ENCODE measurements at regions of chr14 and their contacts with region 1.

Region 1: DNA sequence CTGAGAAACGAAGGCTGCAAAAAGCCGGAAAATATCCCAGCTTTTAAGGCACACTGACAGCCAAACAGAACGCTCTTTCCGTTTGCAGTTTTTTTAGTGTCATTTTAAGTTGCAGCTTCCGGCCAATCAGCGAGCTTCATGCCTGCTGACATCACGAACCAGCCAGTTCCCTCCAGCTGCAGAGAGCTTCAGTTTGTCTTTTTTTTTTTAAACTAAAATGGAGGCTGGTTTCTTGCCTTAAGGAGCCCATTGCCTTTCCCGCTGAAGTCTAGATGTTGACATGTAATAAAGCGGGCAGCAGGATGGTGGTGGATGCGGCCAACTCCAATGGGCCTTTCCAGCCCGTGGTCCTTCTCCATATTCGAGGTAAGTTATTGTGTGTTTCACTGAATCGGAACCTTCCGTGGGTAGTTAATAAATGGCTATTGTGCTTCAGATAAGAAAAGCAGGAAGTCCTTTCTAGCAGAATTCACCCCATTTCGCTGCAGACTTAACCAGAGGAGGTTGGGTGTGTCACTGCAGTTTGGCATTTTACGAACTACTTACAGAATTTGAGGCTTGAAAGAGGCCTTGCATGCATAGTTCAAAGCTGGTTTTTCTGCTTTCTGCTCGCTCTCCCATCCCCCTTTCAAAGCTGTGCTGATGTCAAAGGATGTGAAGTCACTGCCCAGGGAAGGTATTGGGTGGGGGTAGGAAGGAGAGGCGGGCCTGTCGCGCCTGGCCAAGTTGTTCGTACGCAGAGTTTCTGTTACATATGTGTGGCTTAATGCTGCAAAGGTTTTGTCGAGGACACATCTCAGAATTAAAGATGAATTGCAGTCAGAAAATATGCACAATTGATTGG is 48.4 kb downstream of the PPP2R5C start:
- DNase-seq: peak; percentile 91 to 97 (median 95)
- H3K4me3 ChIP-seq: peak overlapping the region; percentile 85 to 97
- H3K4me3 Mint-ChIP-seq: peak overlapping the region; percentile 90 to 97 (median 95)
- H3K27ac ChIP-seq: peak overlapping the region; percentile 98
- H3K27ac Mint-ChIP-seq: peak overlapping the region; percentile 97 to 100 (median 99)
- H3K4me1 ChIP-seq: peaks cover 46% of the 10 kb centered on the region
- H3K4me1 Mint-ChIP-seq: peaks cover 31 to 62% (median 46%) of the 10 kb centered on the region in 4 donors
- H3K27me3 ChIP-seq: no peaks in the 10 kb centered on the region
- H3K27me3 Mint-ChIP-seq: no peaks in the 10 kb centered on the region

Region 2: DNA sequence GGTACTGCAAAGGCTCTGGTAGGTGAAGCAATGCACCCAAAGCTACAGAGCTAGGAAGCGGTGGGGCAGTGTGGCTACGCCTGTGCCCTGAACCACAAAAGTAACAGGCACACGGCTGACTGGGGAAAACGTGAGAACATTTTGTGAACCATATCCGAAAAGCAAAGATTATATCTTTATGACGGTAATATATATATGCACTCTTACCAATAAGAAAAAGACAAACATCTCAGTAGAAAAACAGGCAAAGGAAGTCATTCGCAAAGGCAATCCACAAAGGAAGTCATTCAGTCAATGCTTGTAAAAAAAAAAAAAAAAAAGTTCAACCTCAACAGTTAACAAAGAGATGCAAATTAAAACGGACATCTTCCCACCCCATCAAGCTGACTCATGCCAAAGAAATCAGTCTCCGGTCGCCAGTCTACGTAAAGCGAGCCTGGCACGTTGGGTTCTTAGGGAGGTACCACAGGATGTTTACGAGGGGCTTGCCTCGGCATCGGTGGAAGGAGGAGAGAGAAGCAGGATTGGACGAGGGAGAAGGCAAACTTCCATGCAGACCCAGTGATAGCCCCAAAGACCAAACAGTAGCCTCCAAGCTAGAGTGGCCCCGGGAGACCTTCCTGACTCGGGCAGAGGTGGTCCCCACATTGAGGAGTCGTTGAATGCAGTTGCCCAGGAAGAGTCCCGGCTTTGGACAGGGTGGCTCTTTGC is 87.8 kb before region 1 on chr14:
- CTCF ChIA-PET with region 1: interaction called, 5 read pairs
- POLR2A ChIA-PET with region 1: interaction called, 22 read pairs
- intact Hi-C with region 1: no loop called
- DNase-seq: peak; percentile 90 to 93 (median 91)
- H3K4me3 ChIP-seq: peak overlapping the region in 1 of 2 donors; percentile 55
- H3K4me3 Mint-ChIP-seq: peak overlapping the region; percentile 66 to 92 (median 82)
- H3K27ac ChIP-seq: peak overlapping the region; percentile 84
- H3K27ac Mint-ChIP-seq: peak overlapping the region; percentile 92 to 100 (median 97)
- H3K4me1 ChIP-seq: peaks cover 61% of the 10 kb centered on the region
- H3K4me1 Mint-ChIP-seq: peaks cover 35 to 69% (median 46%) of the 10 kb centered on the region in 4 donors
- H3K27me3 ChIP-seq: no peaks in the 10 kb centered on the region
- H3K27me3 Mint-ChIP-seq: no peaks in the 10 kb centered on the region

Region 3: DNA sequence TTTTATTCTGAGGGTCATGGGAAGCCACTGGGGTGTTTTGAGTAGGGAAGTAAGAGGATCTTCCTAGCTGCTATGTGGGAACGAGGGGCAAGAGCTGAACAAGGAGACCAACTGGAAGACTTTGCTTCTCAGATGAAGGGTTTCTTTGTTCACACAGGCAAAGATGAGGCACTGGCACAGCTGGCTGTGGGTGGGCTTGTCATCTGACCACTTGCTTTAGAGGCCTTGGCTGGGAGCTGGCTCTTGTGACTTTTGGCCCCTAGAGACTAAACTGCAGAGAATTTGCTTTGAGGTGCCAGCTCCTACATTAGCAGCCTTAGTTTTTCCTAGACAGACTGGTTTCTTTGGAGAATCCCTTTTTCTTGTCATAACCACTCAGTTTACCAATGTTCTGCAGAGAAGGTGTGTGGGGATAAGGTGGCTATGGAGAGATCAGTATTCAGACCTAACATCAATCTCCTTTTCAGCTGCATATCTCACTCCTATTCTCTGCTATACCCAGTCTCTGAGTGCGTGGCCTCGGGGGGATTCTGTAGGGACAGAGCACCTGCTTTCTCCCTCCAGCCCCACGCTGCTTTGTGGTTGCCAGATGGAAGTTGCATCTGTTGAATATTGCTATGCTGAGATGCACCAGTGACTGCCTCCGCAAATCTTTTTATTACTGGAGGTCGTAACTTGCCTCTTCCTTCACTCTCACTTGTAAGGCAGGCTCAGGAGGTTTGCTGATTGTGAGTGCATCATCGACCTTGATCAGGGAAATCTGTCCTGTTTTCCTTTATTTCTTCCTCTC is 35.7 kb before region 1 on chr14:
- CTCF ChIA-PET with region 1: interaction called, 44 read pairs
- POLR2A ChIA-PET with region 1: interaction called, 49 read pairs
- intact Hi-C with region 1: no loop called
- DNase-seq: no peak
- H3K4me3 ChIP-seq: no peak overlapping the region
- H3K4me3 Mint-ChIP-seq: no peak overlapping the region
- H3K27ac ChIP-seq: no peak overlapping the region
- H3K27ac Mint-ChIP-seq: peak overlapping the region in 3 of 7 donors; percentile 5 to 69 (median 42)
- H3K4me1 ChIP-seq: peaks cover 13% of the 10 kb centered on the region
- H3K4me1 Mint-ChIP-seq: peaks cover 14 to 42% (median 27%) of the 10 kb centered on the region in 4 donors
- H3K27me3 ChIP-seq: no peaks in the 10 kb centered on the region
- H3K27me3 Mint-ChIP-seq: no peaks in the 10 kb centered on the region

Region 4: GRCh38 chr14:101791919-101792572 is 17.8 kb before region 1 on chr14:
- CTCF ChIA-PET with region 1: interaction called, 8 read pairs
- POLR2A ChIA-PET with region 1: interaction called, 39 read pairs
- intact Hi-C with region 1: loop called (anchors 2 kb)
- DNase-seq: peak in 4 of 5 donors; percentile 42 to 54 (median 44)
- H3K4me3 ChIP-seq: peak overlapping the region; percentile 13 to 41
- H3K4me3 Mint-ChIP-seq: peak overlapping the region; percentile 66 to 90 (median 80)
- H3K27ac ChIP-seq: peak overlapping the region; percentile 58
- H3K27ac Mint-ChIP-seq: peak overlapping the region; percentile 81 to 95 (median 86)
- H3K4me1 ChIP-seq: peaks cover 14% of the 10 kb centered on the region
- H3K4me1 Mint-ChIP-seq: peaks cover 18 to 36% (median 26%) of the 10 kb centered on the region in 4 donors
- H3K27me3 ChIP-seq: no peaks in the 10 kb centered on the region
- H3K27me3 Mint-ChIP-seq: no peaks in the 10 kb centered on the region

Region 5: GRCh38 chr14:101834800-101835547 is 25.1 kb after region 1 on chr14:
- CTCF ChIA-PET with region 1: interaction called, 3 read pairs
- POLR2A ChIA-PET with region 1: interaction called, 1,038 read pairs
- intact Hi-C with region 1: no loop called
- DNase-seq: no peak
- H3K4me3 ChIP-seq: no peak overlapping the region
- H3K4me3 Mint-ChIP-seq: peak overlapping the region in 5 of 8 donors; percentile 15 to 62 (median 35)
- H3K27ac ChIP-seq: peak overlapping the region; percentile 31
- H3K27ac Mint-ChIP-seq: peak overlapping the region; percentile 65 to 97 (median 83)
- H3K4me1 ChIP-seq: peaks cover 100% of the 10 kb centered on the region
- H3K4me1 Mint-ChIP-seq: peaks cover 61 to 99% (median 82%) of the 10 kb centered on the region in 4 donors
- H3K27me3 ChIP-seq: no peaks in the 10 kb centered on the region
- H3K27me3 Mint-ChIP-seq: no peaks in the 10 kb centered on the region

Region 6: DNA sequence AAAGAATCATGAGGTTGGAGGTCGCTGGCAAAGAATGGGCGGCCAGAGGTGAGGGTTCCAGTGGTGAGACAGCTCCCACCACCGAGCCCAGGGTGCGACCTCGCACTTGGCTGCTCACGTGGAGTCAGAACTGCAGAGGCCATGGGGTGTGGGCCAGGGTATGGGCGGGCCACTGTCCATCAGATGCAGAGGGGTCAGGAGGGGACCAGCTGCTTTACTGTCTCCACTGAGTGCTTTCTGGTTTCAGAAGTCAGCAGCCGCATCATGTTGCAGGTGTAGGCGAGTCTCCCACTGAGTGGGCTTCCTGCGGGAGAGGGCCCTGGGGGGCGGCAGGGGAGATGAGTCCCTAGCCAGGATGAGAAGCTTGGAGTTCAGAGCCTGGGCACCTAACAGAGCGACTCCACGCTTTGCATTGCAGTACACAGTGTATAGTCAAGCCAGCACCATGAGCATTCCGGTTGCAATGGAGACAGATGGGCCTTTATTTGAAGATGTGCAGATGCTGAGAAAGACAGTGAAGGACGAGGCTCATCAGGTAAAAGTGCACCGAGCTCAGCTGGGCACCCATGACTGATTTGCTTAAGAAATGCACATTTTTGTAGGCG is 107.6 kb after region 1 on chr14:
- CTCF ChIA-PET with region 1: no interaction called
- POLR2A ChIA-PET with region 1: no interaction called
- intact Hi-C with region 1: no loop called
- DNase-seq: no peak
- H3K4me3 ChIP-seq: no peak overlapping the region
- H3K4me3 Mint-ChIP-seq: no peak overlapping the region
- H3K27ac ChIP-seq: no peak overlapping the region
- H3K27ac Mint-ChIP-seq: peak overlapping the region in 3 of 7 donors; percentile 23 to 88 (median 30)
- H3K4me1 ChIP-seq: no peaks in the 10 kb centered on the region
- H3K4me1 Mint-ChIP-seq: peaks cover 0 to 14% (median 1%) of the 10 kb centered on the region in 4 donors
- H3K27me3 ChIP-seq: no peaks in the 10 kb centered on the region
- H3K27me3 Mint-ChIP-seq: no peaks in the 10 kb centered on the region

Region 7: GRCh38 chr14:102125546-102125945 is 315.7 kb after region 1 on chr14:
- CTCF ChIA-PET with region 1: no interaction called
- POLR2A ChIA-PET with region 1: no interaction called
- intact Hi-C with region 1: no loop called
- DNase-seq: no peak
- H3K4me3 ChIP-seq: no peak overlapping the region
- H3K4me3 Mint-ChIP-seq: no peak overlapping the region
- H3K27ac ChIP-seq: no peak overlapping the region
- H3K27ac Mint-ChIP-seq: no peak overlapping the region
- H3K4me1 ChIP-seq: no peaks in the 10 kb centered on the region
- H3K4me1 Mint-ChIP-seq: no peaks in the 10 kb centered on the region
- H3K27me3 ChIP-seq: no peaks in the 10 kb centered on the region
- H3K27me3 Mint-ChIP-seq: no peaks in the 10 kb centered on the region

Region 8: GRCh38 chr14:102606296-102606695 is 796.4 kb after region 1 on chr14:
- CTCF ChIA-PET with region 1: no interaction called
- POLR2A ChIA-PET with region 1: no interaction called
- intact Hi-C with region 1: no loop called
- DNase-seq: no peak
- H3K4me3 ChIP-seq: no peak overlapping the region
- H3K4me3 Mint-ChIP-seq: no peak overlapping the region
- H3K27ac ChIP-seq: no peak overlapping the region
- H3K27ac Mint-ChIP-seq: peak overlapping the region in 2 of 7 donors; percentile 13 to 77
- H3K4me1 ChIP-seq: peaks cover 10% of the 10 kb centered on the region
- H3K4me1 Mint-ChIP-seq: peaks cover 26 to 65% (median 33%) of the 10 kb centered on the region in 4 donors
- H3K27me3 ChIP-seq: no peaks in the 10 kb centered on the region
- H3K27me3 Mint-ChIP-seq: no peaks in the 10 kb centered on the region